Vagina (tissue), 2 donors: ENCODE measurements at regions of chr18 and their contacts with region 1.

Region 1: DNA sequence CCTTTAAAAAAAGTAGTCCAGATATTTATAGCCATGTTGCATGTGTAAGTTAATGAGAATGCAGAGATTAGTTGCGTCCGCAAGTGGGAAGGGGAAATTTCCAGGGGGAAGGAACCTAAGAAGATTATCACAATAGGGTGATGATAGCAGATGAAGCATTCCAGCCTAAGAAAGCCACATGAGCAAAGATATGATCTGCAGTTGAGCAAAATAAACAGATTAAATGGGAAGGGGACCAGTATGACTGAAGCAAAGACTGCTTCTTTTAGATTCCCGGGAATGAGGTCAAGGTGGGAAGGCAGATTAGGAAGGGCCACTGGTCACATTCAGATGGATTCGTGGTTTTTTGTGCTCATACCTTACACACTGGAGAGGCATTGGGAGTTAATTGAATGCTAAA is 154.6 kb upstream of the CDH2 start:
- DNase-seq: no peak
- H3K4me3 ChIP-seq: no peak overlapping the region
- H3K27ac ChIP-seq: no peak overlapping the region
- H3K4me1 ChIP-seq: no peaks in the 10 kb centered on the region
- H3K27me3 ChIP-seq: no peaks in the 10 kb centered on the region
- CTCF ChIP-seq: no peak
- POLR2A ChIP-seq: no peak

Region 2: DNA sequence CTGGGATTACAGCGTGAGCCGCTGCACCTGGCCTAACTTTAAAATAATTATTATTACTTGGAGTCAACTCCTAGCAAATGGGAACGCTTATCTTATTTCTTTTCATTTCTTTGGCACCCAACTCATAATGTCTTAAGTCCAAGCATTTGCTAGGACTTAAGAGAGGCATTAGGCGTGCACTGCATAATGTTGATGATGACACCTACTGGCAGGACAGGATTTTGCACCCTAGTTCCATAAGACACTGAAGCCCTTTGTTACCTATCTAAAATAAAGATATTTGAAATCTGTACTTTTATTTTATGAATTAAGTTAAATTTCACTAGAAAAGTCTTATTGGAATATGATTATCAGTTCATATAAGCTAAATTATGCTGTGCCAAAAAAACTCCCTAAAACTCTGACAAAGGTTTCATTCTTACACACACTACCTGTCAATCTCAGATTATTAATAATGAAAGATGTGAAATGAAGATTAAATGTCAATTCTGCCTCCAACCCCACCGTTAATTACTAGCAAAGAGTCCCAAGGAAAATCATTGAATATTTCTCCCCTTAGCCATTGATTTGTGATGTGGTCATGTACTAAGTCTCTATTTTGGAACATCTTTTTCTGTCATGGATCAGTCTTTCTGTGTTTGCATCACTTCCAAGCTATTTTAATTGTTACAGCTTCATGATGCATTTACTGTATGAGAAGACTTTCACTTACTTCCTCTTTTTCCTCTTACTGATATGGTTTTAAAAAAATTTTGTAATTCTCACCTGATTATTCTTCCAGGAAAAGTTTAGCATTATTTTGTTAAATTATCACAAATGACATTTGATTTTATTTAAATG is 141.9 kb before region 1 on chr18:
- intact Hi-C with region 1: no loop called
- DNase-seq: no peak
- H3K4me3 ChIP-seq: no peak overlapping the region
- H3K27ac ChIP-seq: no peak overlapping the region
- H3K4me1 ChIP-seq: no peaks in the 10 kb centered on the region
- H3K27me3 ChIP-seq: no peaks in the 10 kb centered on the region
- CTCF ChIP-seq: no peak
- POLR2A ChIP-seq: no peak

Region 3: DNA sequence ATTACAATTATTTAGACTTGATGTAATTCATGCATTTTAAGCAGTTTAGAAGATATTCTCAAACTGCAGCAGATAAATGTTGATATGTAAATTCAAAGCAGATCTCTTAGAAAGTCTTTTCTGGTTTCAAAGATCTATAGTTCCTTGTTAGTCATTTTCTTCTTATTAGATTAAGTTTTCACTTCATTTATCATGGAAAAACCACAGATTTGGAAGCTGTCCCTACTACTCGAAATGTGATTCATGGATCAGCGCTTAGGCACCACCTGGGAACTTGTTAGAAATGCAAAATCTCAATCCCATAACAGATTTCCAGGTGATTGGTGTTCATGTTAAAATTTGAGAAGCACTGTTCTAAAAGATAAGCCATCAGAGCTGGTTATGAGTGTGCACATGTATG is 61.8 kb before region 1 on chr18:
- intact Hi-C with region 1: loop called (anchors 10 kb)
- DNase-seq: no peak
- H3K4me3 ChIP-seq: no peak overlapping the region
- H3K27ac ChIP-seq: no peak overlapping the region
- H3K4me1 ChIP-seq: no peaks in the 10 kb centered on the region
- H3K27me3 ChIP-seq: no peaks in the 10 kb centered on the region
- CTCF ChIP-seq: no peak
- POLR2A ChIP-seq: no peak

Region 4: GRCh38 chr18:28669165-28669564 is 337.6 kb after region 1 on chr18:
- intact Hi-C with region 1: no loop called
- DNase-seq: no peak
- H3K4me3 ChIP-seq: no peak overlapping the region
- H3K27ac ChIP-seq: no peak overlapping the region
- H3K4me1 ChIP-seq: no peaks in the 10 kb centered on the region
- H3K27me3 ChIP-seq: no peaks in the 10 kb centered on the region
- CTCF ChIP-seq: no peak
- POLR2A ChIP-seq: no peak

Region 5: DNA sequence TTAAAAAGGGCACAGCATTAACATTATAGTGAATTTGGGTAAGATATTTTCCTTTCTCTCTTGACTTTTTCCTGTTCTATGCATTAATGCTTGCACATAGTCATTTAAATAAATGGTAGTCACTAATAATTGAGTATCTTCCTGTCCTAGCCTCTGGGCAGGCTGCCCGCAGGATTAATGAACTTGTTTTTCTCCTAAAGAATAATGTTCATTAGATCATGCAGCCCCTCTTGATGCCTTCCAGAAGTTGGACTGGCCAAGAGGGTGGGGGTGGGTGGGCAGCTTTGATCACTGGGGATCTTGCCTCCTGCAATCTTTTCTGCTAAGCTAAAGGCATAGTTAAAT is 359.9 kb after region 1 on chr18:
- intact Hi-C with region 1: no loop called
- DNase-seq: no peak
- H3K4me3 ChIP-seq: no peak overlapping the region
- H3K27ac ChIP-seq: no peak overlapping the region
- H3K4me1 ChIP-seq: no peaks in the 10 kb centered on the region
- H3K27me3 ChIP-seq: no peaks in the 10 kb centered on the region
- CTCF ChIP-seq: no peak
- POLR2A ChIP-seq: no peak